Activated CD8-positive, alpha-beta T cell treated with anti-CD3 and anti-CD28 coated beads for 36 hours (primary cell): ENCODE measurements at regions of chr19 and their contacts with region 1.

Region 1: GRCh38 chr19:51514866-51515481 is 13.4 kb upstream of the SIGLEC12 start:
- DNase-seq: peak; percentile 32
- ATAC-seq: peak; percentile 53
- H3K4me3 Mint-ChIP-seq: no peak overlapping the region
- H3K27ac Mint-ChIP-seq: no peak overlapping the region
- H3K4me1 Mint-ChIP-seq: peaks cover 6% of the 10 kb centered on the region
- H3K27me3 Mint-ChIP-seq: peaks cover 17% of the 10 kb centered on the region
- CTCF ChIP-seq: peak; percentile 80

Region 2: DNA sequence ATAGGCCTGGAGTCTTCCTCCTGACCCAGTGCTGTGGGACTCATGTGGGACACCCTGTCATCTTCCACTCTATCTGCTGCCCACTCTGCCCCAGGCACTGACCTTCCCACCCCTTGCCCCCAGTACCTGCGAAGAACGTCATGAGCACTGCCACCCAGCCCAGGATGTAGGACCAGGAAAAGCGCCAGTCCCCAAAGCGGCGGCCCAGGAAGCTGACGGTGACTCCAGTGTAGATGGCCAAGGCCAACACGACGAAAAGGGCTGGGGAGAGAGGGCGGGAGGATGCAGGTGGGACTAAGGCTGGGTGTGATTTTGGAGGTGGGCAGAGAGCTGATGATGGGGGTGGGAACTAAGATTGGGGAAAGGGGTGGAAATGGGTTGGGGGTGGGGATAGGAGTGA is 134.6 kb before region 1 on chr19:
- CTCF ChIA-PET with region 1: no interaction called
- POLR2A ChIA-PET with region 1: no interaction called
- intact Hi-C with region 1: no loop called
- DNase-seq: no peak
- ATAC-seq: no peak
- H3K4me3 Mint-ChIP-seq: no peak overlapping the region
- H3K27ac Mint-ChIP-seq: peak overlapping the region; percentile 56
- H3K4me1 Mint-ChIP-seq: peaks cover 39% of the 10 kb centered on the region
- H3K27me3 Mint-ChIP-seq: no peaks in the 10 kb centered on the region
- CTCF ChIP-seq: no peak

Region 3: DNA sequence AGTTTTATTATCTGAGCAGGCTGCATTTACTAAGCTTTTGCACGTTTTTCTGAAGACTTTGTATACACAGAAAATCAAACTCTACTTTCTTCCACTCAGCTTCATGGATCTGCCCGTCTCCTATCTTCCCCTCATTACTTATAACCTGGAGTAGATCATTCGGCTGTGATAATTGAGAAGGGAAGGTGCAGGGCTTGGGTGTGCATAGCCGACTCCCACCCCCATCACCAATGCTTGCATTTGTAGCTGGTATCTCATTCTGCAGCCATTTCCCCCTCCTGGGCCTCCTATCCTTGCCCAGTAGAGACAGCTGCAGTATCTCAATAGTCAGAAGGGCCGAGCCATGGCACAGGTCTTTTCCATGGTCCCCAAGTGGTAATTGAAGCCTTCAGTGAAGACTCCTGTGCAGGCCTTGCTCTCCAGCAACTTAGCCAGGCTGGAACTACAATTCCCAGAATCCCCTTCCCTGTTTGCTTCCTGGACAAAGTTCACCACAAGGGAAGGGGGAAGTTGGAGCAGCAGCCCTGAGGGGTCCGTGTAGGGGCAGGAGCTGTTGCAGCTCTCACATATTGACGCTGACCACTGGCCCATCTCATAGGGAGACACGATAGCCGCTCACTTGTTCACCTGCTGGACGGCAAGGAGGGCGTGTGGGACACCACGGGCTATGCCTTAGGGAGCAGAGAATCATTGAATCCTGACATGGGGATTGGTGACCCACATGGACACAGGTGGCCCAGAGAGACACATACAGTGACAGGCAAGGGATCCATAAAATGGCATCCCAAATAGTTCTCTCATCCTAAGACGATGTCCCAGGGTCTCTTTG is 54.6 kb before region 1 on chr19:
- CTCF ChIA-PET with region 1: interaction called, 10 read pairs
- POLR2A ChIA-PET with region 1: no interaction called
- intact Hi-C with region 1: no loop called
- DNase-seq: no peak
- ATAC-seq: no peak
- H3K4me3 Mint-ChIP-seq: no peak overlapping the region
- H3K27ac Mint-ChIP-seq: no peak overlapping the region
- H3K4me1 Mint-ChIP-seq: peaks cover 17% of the 10 kb centered on the region
- H3K27me3 Mint-ChIP-seq: peaks cover 47% of the 10 kb centered on the region
- CTCF ChIP-seq: no peak

Region 4: GRCh38 chr19:51467864-51468544 is 47.0 kb before region 1 on chr19:
- CTCF ChIA-PET with region 1: interaction called, 114 read pairs
- POLR2A ChIA-PET with region 1: interaction called, 4 read pairs
- intact Hi-C with region 1: loop called (anchors 5 kb)
- DNase-seq: no peak
- ATAC-seq: no peak
- H3K4me3 Mint-ChIP-seq: no peak overlapping the region
- H3K27ac Mint-ChIP-seq: no peak overlapping the region
- H3K4me1 Mint-ChIP-seq: peaks cover 35% of the 10 kb centered on the region
- H3K27me3 Mint-ChIP-seq: peaks cover 42% of the 10 kb centered on the region
- CTCF ChIP-seq: no peak

Region 5: GRCh38 chr19:51489113-51489512 is 25.9 kb before region 1 on chr19:
- CTCF ChIA-PET with region 1: interaction called, 10 read pairs
- POLR2A ChIA-PET with region 1: no interaction called
- intact Hi-C with region 1: no loop called
- DNase-seq: peak; percentile 65
- ATAC-seq: peak; percentile 94
- H3K4me3 Mint-ChIP-seq: no peak overlapping the region
- H3K27ac Mint-ChIP-seq: peak overlapping the region; percentile 72
- H3K4me1 Mint-ChIP-seq: peaks cover 21% of the 10 kb centered on the region
- H3K27me3 Mint-ChIP-seq: peaks cover 23% of the 10 kb centered on the region
- CTCF ChIP-seq: no peak

Region 6: DNA sequence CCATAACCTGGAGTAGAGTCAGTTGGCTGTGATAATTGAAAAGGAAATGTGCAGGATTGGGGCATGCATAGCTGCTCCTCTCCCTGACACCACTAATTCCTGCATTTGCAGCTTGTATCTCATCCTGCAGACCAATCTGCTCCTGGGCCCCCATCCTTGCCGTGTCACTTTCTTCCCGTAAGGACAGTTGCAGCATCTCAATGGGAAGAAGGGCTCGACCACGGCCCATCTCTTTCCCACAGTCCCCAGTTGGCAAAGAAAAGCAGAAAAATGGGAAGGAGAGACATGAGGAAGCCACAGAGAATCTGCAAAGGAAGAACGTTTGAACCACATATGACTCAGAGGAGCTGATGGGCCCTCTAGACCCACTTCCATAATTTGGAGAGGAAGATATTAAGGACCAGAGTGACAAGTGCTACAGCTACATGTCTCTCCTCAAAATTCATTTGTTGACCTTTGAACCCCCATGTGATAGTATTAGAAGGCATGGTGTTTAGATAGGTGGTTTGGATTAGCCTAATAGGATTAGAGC is 11.6 kb before region 1 on chr19:
- CTCF ChIA-PET with region 1: interaction called, 15 read pairs
- POLR2A ChIA-PET with region 1: no interaction called
- intact Hi-C with region 1: no loop called
- DNase-seq: no peak
- ATAC-seq: no peak
- H3K4me3 Mint-ChIP-seq: no peak overlapping the region
- H3K27ac Mint-ChIP-seq: no peak overlapping the region
- H3K4me1 Mint-ChIP-seq: peaks cover 12% of the 10 kb centered on the region
- H3K27me3 Mint-ChIP-seq: peaks cover 2% of the 10 kb centered on the region
- CTCF ChIP-seq: no peak

Region 7: GRCh38 chr19:51530031-51530430 is 15.1 kb after region 1 on chr19:
- CTCF ChIA-PET with region 1: interaction called, 13 read pairs
- POLR2A ChIA-PET with region 1: no interaction called
- intact Hi-C with region 1: no loop called
- DNase-seq: no peak
- ATAC-seq: no peak
- H3K4me3 Mint-ChIP-seq: no peak overlapping the region
- H3K27ac Mint-ChIP-seq: no peak overlapping the region
- H3K4me1 Mint-ChIP-seq: peaks cover 5% of the 10 kb centered on the region
- H3K27me3 Mint-ChIP-seq: peaks cover 41% of the 10 kb centered on the region
- CTCF ChIP-seq: no peak

Region 8: GRCh38 chr19:51607920-51608562 is 93.1 kb after region 1 on chr19:
- CTCF ChIA-PET with region 1: no interaction called
- POLR2A ChIA-PET with region 1: no interaction called
- intact Hi-C with region 1: no loop called
- DNase-seq: peak; percentile 82
- ATAC-seq: no peak
- H3K4me3 Mint-ChIP-seq: no peak overlapping the region
- H3K27ac Mint-ChIP-seq: no peak overlapping the region
- H3K4me1 Mint-ChIP-seq: peaks cover 15% of the 10 kb centered on the region
- H3K27me3 Mint-ChIP-seq: peaks cover 21% of the 10 kb centered on the region
- CTCF ChIP-seq: peak; percentile 51

Region 9: GRCh38 chr19:51660975-51661600 is 146.1 kb after region 1 on chr19:
- CTCF ChIA-PET with region 1: interaction called, 27 read pairs
- POLR2A ChIA-PET with region 1: no interaction called
- intact Hi-C with region 1: no loop called
- DNase-seq: peak; percentile 86
- ATAC-seq: peak; percentile 74
- H3K4me3 Mint-ChIP-seq: no peak overlapping the region
- H3K27ac Mint-ChIP-seq: no peak overlapping the region
- H3K4me1 Mint-ChIP-seq: peaks cover 5% of the 10 kb centered on the region
- H3K27me3 Mint-ChIP-seq: peaks cover 32% of the 10 kb centered on the region
- CTCF ChIP-seq: peak; percentile 73